Activated CD4-positive, alpha-beta memory T cell treated with anti-CD3 and anti-CD28 coated beads for 36 hours (primary cell): ENCODE measurements at regions of chr19 and their contacts with region 1.

Region 1: GRCh38 chr19:17470068-17470841 is at the start of gene SLC27A1:
- DNase-seq: peak; percentile 93
- H3K4me3 Mint-ChIP-seq: peak within 1 kb of the TSS; percentile 90
- H3K27ac Mint-ChIP-seq: peak within 1 kb of the TSS; percentile 76
- H3K4me1 Mint-ChIP-seq: peaks cover 25% of the 10 kb centered on the region
- H3K27me3 Mint-ChIP-seq: no peaks in the 10 kb centered on the region
- total RNA-seq, gene SLC27A1: 4.5 to 4.8 TPM

Region 2: GRCh38 chr19:16185123-16185767 is 1285.0 kb before region 1 on chr19 and contains the start of gene FAM32A:
- CTCF ChIA-PET with region 1: no interaction called
- POLR2A ChIA-PET with region 1: no interaction called
- intact Hi-C with region 1: no loop called
- DNase-seq: peak; percentile 100
- H3K4me3 Mint-ChIP-seq: peak within 1 kb of the TSS; percentile 98
- H3K27ac Mint-ChIP-seq: peak within 1 kb of the TSS; percentile 94
- H3K4me1 Mint-ChIP-seq: peaks cover 28% of the 10 kb centered on the region
- H3K27me3 Mint-ChIP-seq: peaks cover 4% of the 10 kb centered on the region
- total RNA-seq, gene FAM32A: 43.8 to 44.3 TPM

Region 3: DNA sequence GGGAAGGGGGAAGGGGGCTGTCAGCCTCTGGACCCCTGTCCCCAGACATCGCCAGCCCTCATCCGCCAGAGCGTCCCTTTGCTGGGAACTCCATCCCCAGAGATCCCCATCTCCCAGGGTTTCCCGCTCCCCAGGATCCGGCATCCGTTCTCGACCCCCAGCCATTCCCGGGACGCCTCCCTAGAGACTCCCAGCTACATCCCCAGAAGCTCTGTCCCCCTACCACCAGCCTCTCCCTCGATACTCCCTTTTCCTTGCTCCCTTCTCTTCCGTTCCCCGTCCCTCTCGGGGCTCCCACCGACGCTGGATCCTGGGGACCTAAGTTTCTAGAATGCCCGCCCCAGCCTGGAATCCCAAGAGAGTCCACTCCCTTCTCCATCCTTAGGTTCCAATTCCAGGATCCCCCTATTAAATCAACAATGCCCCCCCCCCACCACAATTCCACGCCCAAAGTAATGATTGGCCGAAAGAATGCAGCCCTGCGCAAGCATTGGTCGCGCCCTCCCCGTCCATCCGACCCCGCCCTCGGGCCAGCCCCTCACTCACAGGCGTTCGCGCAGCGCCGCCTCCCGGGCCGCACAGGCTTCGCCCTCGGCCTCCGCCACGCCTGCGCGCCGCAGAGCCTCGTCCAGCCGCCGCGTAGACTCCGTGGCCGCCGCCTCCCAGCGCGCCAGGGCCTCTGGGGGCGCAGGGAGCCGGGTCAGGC is 79.4 kb before region 1 on chr19:
- CTCF ChIA-PET with region 1: interaction called, 12 read pairs
- POLR2A ChIA-PET with region 1: no interaction called
- intact Hi-C with region 1: loop called (anchors 1 kb)
- DNase-seq: peak; percentile 94
- H3K4me3 Mint-ChIP-seq: peak overlapping the region; percentile 81
- H3K27ac Mint-ChIP-seq: no peak overlapping the region
- H3K4me1 Mint-ChIP-seq: peaks cover 26% of the 10 kb centered on the region
- H3K27me3 Mint-ChIP-seq: no peaks in the 10 kb centered on the region

Region 4: DNA sequence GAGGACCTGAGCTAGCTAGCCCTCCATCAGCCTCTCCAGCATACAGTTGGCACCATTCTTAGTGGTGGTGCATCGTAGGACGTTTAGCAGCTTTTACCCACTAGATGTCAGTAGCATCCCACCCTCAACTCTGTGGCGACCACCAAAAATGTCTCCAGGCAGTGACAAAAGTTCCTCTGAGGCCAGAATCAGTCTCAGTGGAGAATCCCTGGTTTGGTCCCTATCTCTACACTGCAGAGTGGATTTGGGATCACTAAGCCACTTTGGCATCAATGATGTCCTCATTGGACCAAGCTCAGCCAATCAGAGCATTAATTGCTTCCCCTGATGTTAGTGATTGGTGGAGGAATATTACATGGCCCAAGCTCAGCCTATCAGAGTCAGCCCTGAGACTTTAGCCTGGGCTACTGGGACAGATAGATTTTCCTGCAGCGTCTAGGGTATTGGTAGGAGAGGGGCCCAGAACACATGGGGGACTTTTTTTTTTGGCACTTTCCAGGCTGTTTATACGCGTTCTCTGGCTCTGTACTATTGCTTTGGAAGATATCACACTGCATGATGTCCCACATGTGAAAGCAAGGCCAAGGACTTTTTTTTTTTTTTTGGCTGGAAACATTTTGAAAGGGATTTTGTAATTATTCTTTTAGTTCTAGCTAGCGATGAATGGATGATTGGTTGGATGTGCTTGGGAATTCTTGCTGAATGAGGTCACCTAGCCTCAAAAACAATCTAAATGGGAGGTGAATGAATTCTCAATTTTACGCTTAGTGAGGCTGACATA is 28.8 kb before region 1 on chr19:
- CTCF ChIA-PET with region 1: interaction called, 23 read pairs
- POLR2A ChIA-PET with region 1: no interaction called
- intact Hi-C with region 1: no loop called
- DNase-seq: peak; percentile 29
- H3K4me3 Mint-ChIP-seq: no peak overlapping the region
- H3K27ac Mint-ChIP-seq: no peak overlapping the region
- H3K4me1 Mint-ChIP-seq: no peaks in the 10 kb centered on the region
- H3K27me3 Mint-ChIP-seq: no peaks in the 10 kb centered on the region

Region 5: GRCh38 chr19:17511724-17512573 is 41.7 kb after region 1 on chr19:
- CTCF ChIA-PET with region 1: interaction called, 4 read pairs
- POLR2A ChIA-PET with region 1: interaction called, 3 read pairs
- intact Hi-C with region 1: loop called (anchors 2 kb)
- DNase-seq: peak; percentile 90
- H3K4me3 Mint-ChIP-seq: peak overlapping the region; percentile 96
- H3K27ac Mint-ChIP-seq: peak overlapping the region; percentile 80
- H3K4me1 Mint-ChIP-seq: peaks cover 38% of the 10 kb centered on the region
- H3K27me3 Mint-ChIP-seq: no peaks in the 10 kb centered on the region